Transverse colon (tissue), 4 donors: ENCODE measurements at regions of chr1 and their contacts with region 1.

Region 1: DNA sequence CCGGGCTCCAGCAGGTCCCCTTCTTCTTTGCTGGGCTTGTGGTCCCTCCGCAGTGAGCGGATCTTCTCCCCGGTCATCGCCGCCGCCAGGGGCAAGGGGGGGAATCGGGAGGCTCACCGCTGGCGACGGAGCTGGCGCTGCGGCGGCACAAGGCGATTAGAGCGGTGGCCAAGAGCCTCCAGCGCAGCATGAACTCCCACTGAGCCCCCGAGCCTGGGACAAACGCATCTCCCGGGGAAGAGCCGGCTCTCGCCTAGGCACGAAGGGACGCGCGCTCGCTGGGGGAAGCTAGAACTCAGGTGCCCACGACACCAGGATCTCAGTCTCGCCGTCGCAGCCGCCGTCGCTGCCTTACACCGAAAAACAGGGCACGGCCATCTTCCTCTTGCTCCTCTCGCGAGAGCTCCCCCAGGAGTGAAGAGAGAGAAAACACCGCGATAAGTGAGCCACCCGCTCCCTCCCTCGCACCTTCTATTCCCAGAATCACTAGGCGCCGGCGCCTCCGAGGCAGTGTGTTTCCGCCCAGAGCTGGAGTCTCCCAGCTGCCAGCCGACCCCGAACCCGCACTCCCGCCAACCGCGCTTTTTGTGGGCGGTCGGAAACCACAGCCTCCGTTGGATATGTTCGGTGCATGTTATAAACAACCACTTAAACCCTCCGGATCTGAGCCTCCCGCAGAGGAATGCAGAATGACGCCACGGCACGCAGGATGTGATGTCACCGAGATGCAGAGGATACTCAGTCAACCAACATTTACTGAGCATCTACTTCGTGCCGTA is at the start of gene ANKRD13C:
- DNase-seq: peak; percentile 94
- H3K4me3 ChIP-seq: peak within 1 kb of the TSS; percentile 72 to 97 (median 83)
- H3K27ac ChIP-seq: peak within 1 kb of the TSS; percentile 94 to 97 (median 95)
- H3K4me1 ChIP-seq: peaks cover 12 to 51% (median 17%) of the 10 kb centered on the region in 4 donors
- H3K27me3 ChIP-seq: no peaks in the 10 kb centered on the region
- CTCF ChIP-seq: peak in 3 of 5 experiments; percentile 17 to 29 (median 24)
- EP300 ChIP-seq: no peak
- POLR2A ChIP-seq: peak; percentile 89
- total RNA-seq, gene ANKRD13C: 10.7 to 35.5 (median 27.1) TPM

Region 2: GRCh38 chr1:70410604-70411359 is 56.3 kb after region 1 on chr1 and contains the start of gene CTH:
- in situ Hi-C with region 1: loop called in 1 of 4 experiments (anchors 10 kb)
- intact Hi-C with region 1: no loop called
- DNase-seq: peak; percentile 98
- H3K4me3 ChIP-seq: peak within 1 kb of the TSS; percentile 56 to 69 (median 60)
- H3K27ac ChIP-seq: peak within 1 kb of the TSS; percentile 88 to 94 (median 92)
- H3K4me1 ChIP-seq: peaks cover 0 to 20% (median 19%) of the 10 kb centered on the region in 4 donors
- H3K27me3 ChIP-seq: no peaks in the 10 kb centered on the region
- CTCF ChIP-seq: no peak
- EP300 ChIP-seq: no peak
- POLR2A ChIP-seq: peak; percentile 98
- total RNA-seq, gene CTH: 1.9 to 8.6 (median 3.4) TPM in 3 of 4 donors, not detected in the other